B cell (primary cell): ENCODE measurements at regions of chr16 and their contacts with region 1.

Region 1: GRCh38 chr16:85615852-85616606 is 2.9 kb downstream of the GSE1 start:
- DNase-seq: peak; percentile 90
- ATAC-seq: peak; percentile 52
- H3K4me3 ChIP-seq: peak overlapping the region in 4 of 5 experiments; percentile 4 to 60 (median 26)
- H3K4me3 Mint-ChIP-seq: peak overlapping the region; percentile 85
- H3K27ac ChIP-seq: peak overlapping the region; percentile 13 to 14
- H3K27ac Mint-ChIP-seq: peak overlapping the region; percentile 88
- H3K4me1 ChIP-seq: peaks cover 45 to 54% of the 10 kb centered on the region in 2 donors
- H3K4me1 Mint-ChIP-seq: peaks cover 46% of the 10 kb centered on the region
- H3K27me3 ChIP-seq: no peaks in the 10 kb centered on the region
- H3K27me3 Mint-ChIP-seq: no peaks in the 10 kb centered on the region
- CTCF ChIP-seq: peak; percentile 91

Region 2: DNA sequence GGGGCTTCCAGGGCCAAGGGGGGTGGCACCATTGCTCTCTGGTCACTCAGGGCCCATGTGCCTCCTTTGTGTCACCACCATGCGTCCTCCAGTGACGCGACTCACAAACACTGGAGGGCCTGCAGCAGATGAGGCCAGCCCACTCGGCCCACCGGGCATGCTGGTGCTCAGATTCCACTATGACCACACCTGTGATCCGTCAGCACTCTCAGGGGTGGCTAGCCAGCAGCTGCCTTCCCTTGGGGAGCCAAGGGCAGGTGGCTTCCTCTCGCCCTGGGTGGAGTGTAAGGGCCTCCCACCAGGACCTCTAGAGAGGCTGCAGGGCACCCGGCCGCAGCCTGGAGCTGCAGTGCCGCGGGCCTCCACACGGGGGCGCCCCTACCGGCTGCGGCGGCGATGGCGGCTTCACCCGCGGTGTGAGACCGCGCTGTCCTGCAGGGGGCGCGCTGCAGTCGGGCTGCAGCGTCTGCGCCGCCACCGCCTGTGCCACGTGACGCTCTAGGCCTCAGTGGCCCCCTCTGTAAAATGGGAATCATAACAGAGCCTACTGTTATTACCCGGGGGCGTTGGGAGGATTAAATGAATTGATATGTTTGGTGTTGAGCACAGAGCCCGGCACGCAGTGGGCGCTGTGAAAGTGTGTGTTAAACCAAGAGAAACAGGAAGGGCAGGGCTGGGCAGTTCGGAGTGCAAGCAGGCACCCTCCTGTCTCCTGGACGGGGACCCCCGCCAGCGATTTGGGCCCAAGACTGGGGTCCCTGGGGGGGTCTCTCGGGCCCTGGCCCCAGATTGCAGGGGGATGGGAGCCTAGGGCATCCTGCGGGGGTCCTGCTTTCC is 195.3 kb before region 1 on chr16:
- CTCF ChIA-PET with region 1: interaction called, 55 read pairs
- POLR2A ChIA-PET with region 1: interaction called, 3 read pairs
- intact Hi-C with region 1: no loop called
- DNase-seq: peak; percentile 80
- ATAC-seq: peak; percentile 81
- H3K4me3 ChIP-seq: no peak overlapping the region
- H3K4me3 Mint-ChIP-seq: no peak overlapping the region
- H3K27ac ChIP-seq: no peak overlapping the region
- H3K27ac Mint-ChIP-seq: no peak overlapping the region
- H3K4me1 ChIP-seq: peaks cover 0 to 5% of the 10 kb centered on the region in 2 donors
- H3K4me1 Mint-ChIP-seq: no peaks in the 10 kb centered on the region
- H3K27me3 ChIP-seq: peaks cover 0 to 3% (median 0%) of the 10 kb centered on the region in 4 experiments
- H3K27me3 Mint-ChIP-seq: peaks cover 22% of the 10 kb centered on the region
- CTCF ChIP-seq: peak; percentile 100

Region 3: GRCh38 chr16:85479972-85480751 is 135.9 kb before region 1 on chr16:
- CTCF ChIA-PET with region 1: interaction called, 81 read pairs
- POLR2A ChIA-PET with region 1: no interaction called
- intact Hi-C with region 1: loop called (anchors 1 kb)
- DNase-seq: peak; percentile 72
- ATAC-seq: peak; percentile 70
- H3K4me3 ChIP-seq: no peak overlapping the region
- H3K4me3 Mint-ChIP-seq: peak overlapping the region; percentile 32
- H3K27ac ChIP-seq: no peak overlapping the region
- H3K27ac Mint-ChIP-seq: no peak overlapping the region
- H3K4me1 ChIP-seq: peaks cover 11 to 14% of the 10 kb centered on the region in 2 donors
- H3K4me1 Mint-ChIP-seq: peaks cover 15% of the 10 kb centered on the region
- H3K27me3 ChIP-seq: peaks cover 0 to 18% (median 7%) of the 10 kb centered on the region in 4 experiments
- H3K27me3 Mint-ChIP-seq: peaks cover 16% of the 10 kb centered on the region
- CTCF ChIP-seq: peak; percentile 69

Region 4: GRCh38 chr16:85528528-85529387 is 87.3 kb before region 1 on chr16:
- CTCF ChIA-PET with region 1: interaction called, 23 read pairs
- POLR2A ChIA-PET with region 1: no interaction called
- intact Hi-C with region 1: no loop called
- DNase-seq: peak; percentile 50
- ATAC-seq: peak; percentile 33
- H3K4me3 ChIP-seq: no peak overlapping the region
- H3K4me3 Mint-ChIP-seq: no peak overlapping the region
- H3K27ac ChIP-seq: no peak overlapping the region
- H3K27ac Mint-ChIP-seq: peak overlapping the region; percentile 53
- H3K4me1 ChIP-seq: peaks cover 0 to 5% of the 10 kb centered on the region in 2 donors
- H3K4me1 Mint-ChIP-seq: no peaks in the 10 kb centered on the region
- H3K27me3 ChIP-seq: peaks cover 0 to 23% (median 6%) of the 10 kb centered on the region in 4 experiments
- H3K27me3 Mint-ChIP-seq: peaks cover 12% of the 10 kb centered on the region
- CTCF ChIP-seq: peak; percentile 68

Region 5: GRCh38 chr16:85659805-85660495 is 43.9 kb after region 1 on chr16:
- CTCF ChIA-PET with region 1: interaction called, 18 read pairs
- POLR2A ChIA-PET with region 1: no interaction called
- intact Hi-C with region 1: no loop called
- DNase-seq: peak; percentile 73
- ATAC-seq: peak; percentile 94
- H3K4me3 ChIP-seq: no peak overlapping the region
- H3K4me3 Mint-ChIP-seq: no peak overlapping the region
- H3K27ac ChIP-seq: no peak overlapping the region
- H3K27ac Mint-ChIP-seq: peak overlapping the region; percentile 76
- H3K4me1 ChIP-seq: no peaks in the 10 kb centered on the region
- H3K4me1 Mint-ChIP-seq: peaks cover 4% of the 10 kb centered on the region
- H3K27me3 ChIP-seq: no peaks in the 10 kb centered on the region
- H3K27me3 Mint-ChIP-seq: no peaks in the 10 kb centered on the region
- CTCF ChIP-seq: peak; percentile 90

Region 6: DNA sequence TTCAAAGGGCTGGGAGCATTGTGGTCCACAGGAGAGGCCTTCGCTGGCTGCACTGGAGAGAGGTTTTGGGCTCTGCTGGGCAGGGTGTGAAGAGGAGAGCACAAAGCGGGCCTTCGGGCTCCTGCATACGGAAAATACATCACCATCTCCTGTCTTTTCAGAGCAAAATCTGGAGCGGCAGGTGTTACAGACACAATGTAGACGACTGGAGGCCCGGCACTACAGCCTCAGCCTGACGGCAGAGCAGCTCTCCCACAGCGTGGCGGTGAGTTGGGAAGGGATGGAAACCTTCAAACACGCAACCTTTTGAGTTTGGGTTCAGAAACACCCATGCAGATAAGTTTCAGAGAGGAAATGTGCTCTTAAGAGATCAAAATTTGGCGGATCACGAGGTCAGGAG is 54.8 kb after region 1 on chr16:
- CTCF ChIA-PET with region 1: no interaction called
- POLR2A ChIA-PET with region 1: no interaction called
- intact Hi-C with region 1: no loop called
- DNase-seq: no peak
- ATAC-seq: no peak
- H3K4me3 ChIP-seq: no peak overlapping the region
- H3K4me3 Mint-ChIP-seq: no peak overlapping the region
- H3K27ac ChIP-seq: no peak overlapping the region
- H3K27ac Mint-ChIP-seq: no peak overlapping the region
- H3K4me1 ChIP-seq: no peaks in the 10 kb centered on the region
- H3K4me1 Mint-ChIP-seq: no peaks in the 10 kb centered on the region
- H3K27me3 ChIP-seq: no peaks in the 10 kb centered on the region
- H3K27me3 Mint-ChIP-seq: no peaks in the 10 kb centered on the region
- CTCF ChIP-seq: no peak